ENCODE measurements at regions of chr11 and their contacts with region 1.

Region 1: GRCh38 chr11:66835768-66836405 is 7.4 kb upstream of the RCE1 start:
- DNase-seq: no peak
- H3K4me3 ChIP-seq: no peak overlapping the region
- H3K27ac ChIP-seq: no peak overlapping the region
- H3K4me1 ChIP-seq: no peaks in the 10 kb centered on the region
- H3K27me3 ChIP-seq: no peaks in the 10 kb centered on the region
- CTCF ChIP-seq: no peak

Region 2: GRCh38 chr11:66677599-66678375 is 158.1 kb before region 1 on chr11 and contains the start of gene RBM4B:
- CTCF ChIA-PET with region 1: interaction called, 17 read pairs
- POLR2A ChIA-PET with region 1: no interaction called
- intact Hi-C with region 1: no loop called
- DNase-seq: peak; percentile 99
- H3K4me3 ChIP-seq: peak within 1 kb of the TSS; percentile 61
- H3K27ac ChIP-seq: peak within 1 kb of the TSS; percentile 94
- H3K4me1 ChIP-seq: peaks cover 11% of the 10 kb centered on the region
- H3K27me3 ChIP-seq: no peaks in the 10 kb centered on the region
- CTCF ChIP-seq: no peak
- total RNA-seq, gene RBM4B: 35.0 and 40.5 TPM in 2 replicates

Region 3: GRCh38 chr11:66694732-66695207 is 141.1 kb before region 1 on chr11:
- CTCF ChIA-PET with region 1: interaction called, 12 read pairs
- POLR2A ChIA-PET with region 1: no interaction called
- intact Hi-C with region 1: loop called (anchors 1 kb)
- DNase-seq: peak; percentile 95
- H3K4me3 ChIP-seq: no peak overlapping the region
- H3K27ac ChIP-seq: no peak overlapping the region
- H3K4me1 ChIP-seq: no peaks in the 10 kb centered on the region
- H3K27me3 ChIP-seq: no peaks in the 10 kb centered on the region
- CTCF ChIP-seq: peak; percentile 99

Region 4: DNA sequence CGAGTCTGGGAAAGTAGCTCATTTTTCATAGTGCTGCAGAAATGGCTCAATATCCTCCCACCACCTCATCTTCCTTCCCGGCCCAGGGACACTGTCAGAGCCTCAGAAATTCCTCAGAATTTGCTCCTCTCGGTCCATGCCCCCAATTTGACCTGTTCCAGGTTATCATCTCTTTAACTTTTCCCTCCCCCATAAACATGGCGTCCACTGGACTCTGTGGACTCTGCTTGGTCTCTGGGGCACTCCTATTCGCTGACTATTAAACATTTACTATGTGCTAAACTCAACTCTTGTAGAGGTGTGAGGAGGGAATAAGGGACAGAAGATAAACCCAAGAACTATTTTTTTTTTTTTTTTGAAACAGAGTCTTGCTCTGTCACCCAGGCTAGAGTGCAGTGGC is 130.5 kb after region 1 on chr11:
- CTCF ChIA-PET with region 1: interaction called, 12 read pairs
- POLR2A ChIA-PET with region 1: no interaction called
- intact Hi-C with region 1: no loop called
- DNase-seq: no peak
- H3K4me3 ChIP-seq: no peak overlapping the region
- H3K27ac ChIP-seq: no peak overlapping the region
- H3K4me1 ChIP-seq: no peaks in the 10 kb centered on the region
- H3K27me3 ChIP-seq: no peaks in the 10 kb centered on the region
- CTCF ChIP-seq: no peak

Region 5: DNA sequence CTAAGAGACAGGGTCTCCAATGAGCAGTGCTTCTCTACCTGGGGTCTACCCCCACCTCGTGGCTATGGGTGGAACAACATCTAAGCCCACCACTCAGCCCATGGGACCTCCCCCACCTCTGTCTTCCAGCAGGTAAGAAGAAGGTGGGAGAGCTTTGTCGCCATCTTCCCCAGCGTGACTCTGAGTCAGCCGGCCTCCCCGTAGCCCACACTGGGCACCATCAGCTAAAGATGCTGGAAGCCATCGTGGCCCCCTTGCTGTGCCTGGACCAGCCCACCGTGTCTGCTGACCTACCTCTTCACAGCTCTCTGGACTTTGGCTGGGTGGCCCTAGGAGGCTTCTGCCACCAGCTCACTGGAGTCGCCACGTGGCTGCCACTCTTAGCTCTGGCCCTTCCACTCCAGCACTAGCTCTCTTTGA is 140.2 kb after region 1 on chr11:
- CTCF ChIA-PET with region 1: no interaction called
- POLR2A ChIA-PET with region 1: no interaction called
- intact Hi-C with region 1: loop called (anchors 1 kb)
- DNase-seq: peak; percentile 57
- H3K4me3 ChIP-seq: no peak overlapping the region
- H3K27ac ChIP-seq: no peak overlapping the region
- H3K4me1 ChIP-seq: peaks cover under 1% of the 10 kb centered on the region
- H3K27me3 ChIP-seq: no peaks in the 10 kb centered on the region
- CTCF ChIP-seq: peak; percentile 86

Region 6: DNA sequence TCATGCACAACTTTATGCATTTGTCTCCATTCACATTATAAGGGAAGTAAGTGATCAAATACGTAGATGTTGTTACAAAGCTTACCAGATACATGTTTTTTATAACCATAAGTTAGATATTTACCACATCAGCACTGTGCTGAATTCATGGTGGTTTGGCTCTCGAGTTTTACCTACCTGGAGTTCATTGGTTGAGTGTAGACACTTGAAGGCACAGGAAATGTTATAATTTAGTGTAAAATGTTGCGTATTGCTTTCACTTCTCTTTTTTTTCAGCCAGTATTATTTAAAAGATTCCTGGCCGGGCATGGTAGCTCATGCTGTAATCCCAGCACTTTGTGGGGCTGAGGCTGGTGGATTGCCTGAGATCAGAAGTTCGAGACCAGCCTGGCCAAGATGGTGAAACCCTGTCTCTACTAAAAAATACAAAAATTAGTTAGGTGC is 377.3 kb after region 1 on chr11:
- CTCF ChIA-PET with region 1: no interaction called
- POLR2A ChIA-PET with region 1: no interaction called
- intact Hi-C with region 1: no loop called
- DNase-seq: no peak
- H3K4me3 ChIP-seq: no peak overlapping the region
- H3K27ac ChIP-seq: no peak overlapping the region
- H3K4me1 ChIP-seq: no peaks in the 10 kb centered on the region
- H3K27me3 ChIP-seq: no peaks in the 10 kb centered on the region
- CTCF ChIP-seq: no peak

Region 7: DNA sequence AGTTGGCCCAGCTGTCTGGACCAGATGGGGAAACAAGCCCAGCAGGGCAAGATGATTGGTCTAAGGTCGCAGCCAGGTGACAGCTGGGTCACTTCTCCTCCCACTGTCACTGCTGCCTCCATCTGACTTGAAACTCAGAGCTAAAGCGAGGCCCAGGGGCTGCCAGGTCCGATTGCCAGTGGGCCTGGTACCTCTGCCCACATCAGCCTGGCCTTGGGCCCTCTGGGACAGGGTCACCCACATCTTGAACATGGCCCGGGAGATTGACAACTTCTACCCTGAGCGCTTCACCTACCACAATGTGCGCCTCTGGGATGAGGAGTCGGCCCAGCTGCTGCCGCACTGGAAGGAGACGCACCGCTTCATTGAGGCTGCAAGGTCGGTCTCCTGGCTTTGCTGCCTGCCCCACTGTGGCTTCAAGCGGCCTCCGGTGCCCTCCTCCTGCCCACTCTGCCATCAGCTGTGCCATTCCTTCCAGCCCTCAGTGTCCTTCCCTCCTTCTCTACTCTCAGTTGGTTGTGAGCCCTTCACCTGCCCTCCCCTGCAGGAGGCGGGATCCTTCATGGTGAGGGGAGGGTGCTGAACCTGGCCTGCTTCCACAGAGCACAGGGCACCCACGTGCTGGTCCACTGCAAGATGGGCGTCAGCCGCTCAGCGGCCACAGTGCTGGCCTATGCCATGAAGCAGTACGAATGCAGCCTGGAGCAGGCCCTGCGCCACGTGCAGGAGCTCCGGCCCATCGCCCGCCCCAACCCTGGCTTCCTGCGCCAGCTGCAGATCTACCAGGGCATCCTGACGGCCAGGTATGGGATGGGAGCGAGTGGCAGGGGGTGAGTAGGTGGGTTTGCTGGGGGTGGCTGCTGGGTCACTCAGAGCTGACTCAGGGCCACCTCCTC is 473.5 kb after region 1 on chr11:
- CTCF ChIA-PET with region 1: no interaction called
- POLR2A ChIA-PET with region 1: interaction called, 19 read pairs
- intact Hi-C with region 1: no loop called
- DNase-seq: no peak
- H3K4me3 ChIP-seq: no peak overlapping the region
- H3K27ac ChIP-seq: no peak overlapping the region
- H3K4me1 ChIP-seq: no peaks in the 10 kb centered on the region
- H3K27me3 ChIP-seq: no peaks in the 10 kb centered on the region
- CTCF ChIP-seq: no peak